CD8-positive, alpha-beta memory T cell (primary cell): ENCODE measurements at regions of chr17 and their contacts with region 1.

Region 1: GRCh38 chr17:19377602-19378392 is 501 bp upstream of the MAPK7 start:
- DNase-seq: peak; percentile 89 to 96 (median 93)
- H3K4me3 ChIP-seq: peak overlapping the region; percentile 100
- H3K4me3 Mint-ChIP-seq: peak overlapping the region; percentile 94 to 100 (median 97)
- H3K27ac ChIP-seq: peak overlapping the region; percentile 95
- H3K27ac Mint-ChIP-seq: peak overlapping the region; percentile 92 to 98 (median 96)
- H3K4me1 ChIP-seq: peaks cover 11% of the 10 kb centered on the region
- H3K4me1 Mint-ChIP-seq: peaks cover 25 to 31% (median 26%) of the 10 kb centered on the region in 3 donors
- H3K27me3 ChIP-seq: no peaks in the 10 kb centered on the region
- H3K27me3 Mint-ChIP-seq: no peaks in the 10 kb centered on the region

Region 2: DNA sequence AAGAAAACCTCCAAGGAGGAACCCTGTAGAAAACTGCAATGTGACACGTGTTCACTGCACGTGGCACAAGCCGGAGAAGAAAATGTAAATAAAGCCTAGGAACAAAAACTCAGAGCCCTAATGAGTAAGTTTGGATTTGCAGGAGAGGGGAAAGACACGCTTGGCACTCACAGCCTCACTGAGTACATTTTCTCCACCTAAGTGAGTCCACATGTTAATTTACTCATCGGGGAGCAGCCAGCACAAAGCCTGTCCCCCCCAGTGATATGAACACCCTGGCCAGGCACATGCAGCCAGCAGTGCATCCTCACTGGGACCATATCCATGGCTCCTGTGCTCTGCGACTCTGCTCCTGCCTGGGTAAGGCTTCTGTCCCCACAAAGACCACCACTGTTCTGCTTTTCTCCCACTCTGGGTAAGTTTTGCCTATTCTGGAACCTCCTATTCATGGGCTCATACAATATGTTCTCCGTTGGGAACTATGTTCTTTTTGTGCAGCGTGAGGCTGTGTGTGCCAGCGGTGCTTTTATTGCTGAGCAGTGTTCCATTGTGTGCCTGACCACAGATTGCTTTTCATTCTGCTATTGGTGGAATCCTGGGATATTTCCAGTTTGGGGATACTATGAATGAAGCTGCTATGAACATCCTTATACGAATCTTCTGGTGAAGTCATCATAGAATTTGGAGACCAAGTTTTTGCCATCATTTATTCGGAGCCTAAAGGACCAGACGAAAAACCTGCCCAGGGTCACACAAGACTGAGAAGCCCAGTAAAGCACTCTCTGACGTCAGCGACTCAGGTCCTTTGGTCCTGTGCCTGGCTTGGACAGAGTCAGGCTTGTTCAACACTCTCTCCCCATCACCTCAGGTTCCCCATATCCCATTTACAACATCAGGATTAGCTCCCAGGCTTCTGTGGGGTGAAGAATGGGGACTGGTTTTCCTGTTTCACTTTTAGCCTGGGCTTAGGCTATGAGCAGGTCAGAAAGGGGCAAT is 86.5 kb after region 1 on chr17:
- CTCF ChIA-PET with region 1: no interaction called
- POLR2A ChIA-PET with region 1: interaction called, 10 read pairs
- DNase-seq: no peak
- H3K4me3 ChIP-seq: no peak overlapping the region
- H3K4me3 Mint-ChIP-seq: peak overlapping the region in 1 of 7 donors; percentile 65
- H3K27ac ChIP-seq: no peak overlapping the region
- H3K27ac Mint-ChIP-seq: peak overlapping the region in 7 of 8 donors; percentile 12 to 90 (median 83)
- H3K4me1 ChIP-seq: peaks cover 39% of the 10 kb centered on the region
- H3K4me1 Mint-ChIP-seq: peaks cover 28 to 43% (median 29%) of the 10 kb centered on the region in 3 donors
- H3K27me3 ChIP-seq: no peaks in the 10 kb centered on the region
- H3K27me3 Mint-ChIP-seq: no peaks in the 10 kb centered on the region